Activated T-helper 1 cell treated with anti-CD3 and anti-CD28 coated beads, Interleukin-12 subunit alpha, Interleukin-12 subunit beta, Interleukin-2, Interleukin-4 antibody, amounts not matched to agents 30 ng/mL and 10 ng/mL and 1 ng/mL, durations not matched to agents 14 hours and 24 hours and 36 hours (primary cell): ENCODE measurements at regions of chr15 and their contacts with region 1.

Region 1: DNA sequence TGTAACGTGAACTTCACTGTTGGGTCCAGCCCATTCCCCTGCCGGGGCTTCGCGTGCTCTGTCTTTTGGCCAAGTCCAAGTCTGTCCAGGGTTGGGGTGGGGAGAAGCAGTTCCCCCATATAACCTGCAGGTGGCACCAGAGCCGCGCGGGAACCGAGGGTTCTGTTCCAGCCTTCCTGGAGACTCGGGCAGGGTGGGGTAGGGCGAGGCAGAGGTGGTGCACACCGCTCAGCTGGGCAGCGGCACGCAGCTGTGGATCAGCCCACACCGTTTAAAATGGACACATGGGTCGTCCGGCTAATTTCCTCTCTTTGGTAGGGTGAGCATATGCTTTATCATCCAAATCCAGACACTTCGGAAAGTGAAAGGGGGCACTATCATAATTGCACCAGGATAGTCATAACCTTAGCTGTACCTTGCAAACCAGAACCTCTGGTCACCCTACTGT is 118.1 kb downstream of the TBC1D2B start:
- DNase-seq: peak; percentile 67
- H3K4me3 Mint-ChIP-seq: no peak overlapping the region
- H3K27ac Mint-ChIP-seq: no peak overlapping the region
- H3K4me1 Mint-ChIP-seq: peaks cover 14% of the 10 kb centered on the region
- H3K27me3 Mint-ChIP-seq: peaks cover 35% of the 10 kb centered on the region

Region 2: GRCh38 chr15:77907824-77908751 is 51.4 kb before region 1 on chr15:
- intact Hi-C with region 1: loop called (anchors 5 kb)
- DNase-seq: no peak
- H3K4me3 Mint-ChIP-seq: no peak overlapping the region
- H3K27ac Mint-ChIP-seq: no peak overlapping the region
- H3K4me1 Mint-ChIP-seq: peaks cover 11% of the 10 kb centered on the region
- H3K27me3 Mint-ChIP-seq: peaks cover under 1% of the 10 kb centered on the region

Region 3: GRCh38 chr15:78049691-78050440 is 90.4 kb after region 1 on chr15:
- intact Hi-C with region 1: loop called (anchors 5 kb)
- DNase-seq: peak; percentile 62
- H3K4me3 Mint-ChIP-seq: peak overlapping the region; percentile 69
- H3K27ac Mint-ChIP-seq: peak overlapping the region; percentile 97
- H3K4me1 Mint-ChIP-seq: peaks cover 96% of the 10 kb centered on the region
- H3K27me3 Mint-ChIP-seq: no peaks in the 10 kb centered on the region

Region 4: DNA sequence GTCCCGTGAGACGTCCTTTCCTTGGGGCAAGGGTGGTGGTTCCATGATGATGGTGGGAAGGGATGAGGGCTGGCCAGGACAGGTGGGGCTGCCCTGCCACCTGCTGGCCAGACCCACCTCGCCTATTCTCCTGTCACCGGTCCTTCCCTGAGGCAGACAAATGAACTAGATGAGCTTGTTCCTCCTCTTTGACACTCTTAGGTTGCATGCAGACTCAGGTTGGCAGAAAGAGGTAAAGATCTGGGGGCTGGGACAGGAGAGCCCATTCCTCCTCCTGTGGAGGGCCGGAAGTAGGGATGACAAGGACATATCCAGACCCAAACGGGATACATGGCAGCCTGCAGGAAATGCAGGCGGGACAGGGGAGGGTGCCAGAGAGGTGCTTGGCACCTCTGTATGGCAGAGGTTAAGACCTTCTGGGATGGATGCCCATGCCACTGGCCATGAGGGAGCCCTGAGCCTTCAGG is 236.3 kb after region 1 on chr15:
- intact Hi-C with region 1: loop called (anchors 1 kb)
- DNase-seq: peak; percentile 26
- H3K4me3 Mint-ChIP-seq: no peak overlapping the region
- H3K27ac Mint-ChIP-seq: no peak overlapping the region
- H3K4me1 Mint-ChIP-seq: no peaks in the 10 kb centered on the region
- H3K27me3 Mint-ChIP-seq: peaks cover 14% of the 10 kb centered on the region

Region 5: GRCh38 chr15:78241007-78241406 is 281.6 kb after region 1 on chr15:
- intact Hi-C with region 1: loop called (anchors 1 kb)
- DNase-seq: peak; percentile 70
- H3K4me3 Mint-ChIP-seq: no peak overlapping the region
- H3K27ac Mint-ChIP-seq: no peak overlapping the region
- H3K4me1 Mint-ChIP-seq: no peaks in the 10 kb centered on the region
- H3K27me3 Mint-ChIP-seq: peaks cover 16% of the 10 kb centered on the region

Region 6: GRCh38 chr15:78422571-78423340 is 463.3 kb after region 1 on chr15:
- intact Hi-C with region 1: loop called (anchors 2 kb)
- DNase-seq: peak; percentile 32
- H3K4me3 Mint-ChIP-seq: no peak overlapping the region
- H3K27ac Mint-ChIP-seq: no peak overlapping the region
- H3K4me1 Mint-ChIP-seq: peaks cover 12% of the 10 kb centered on the region
- H3K27me3 Mint-ChIP-seq: peaks cover 17% of the 10 kb centered on the region